Activated naive CD4-positive, alpha-beta T cell treated with anti-CD3 and anti-CD28 coated beads for 36 hours (primary cell): ENCODE measurements at regions of chr4 and their contacts with region 1.

Region 1: GRCh38 chr4:82957045-82957444 is 53.6 kb downstream of the LIN54 start:
- DNase-seq: peak; percentile 13
- H3K4me3 Mint-ChIP-seq: no peak overlapping the region
- H3K27ac Mint-ChIP-seq: no peak overlapping the region
- H3K4me1 Mint-ChIP-seq: peaks cover 11% of the 10 kb centered on the region
- H3K27me3 Mint-ChIP-seq: no peaks in the 10 kb centered on the region

Region 2: GRCh38 chr4:82989575-82990429 is 32.8 kb after region 1 on chr4:
- CTCF ChIA-PET with region 1: no interaction called
- intact Hi-C with region 1: loop called (anchors 5 kb)
- DNase-seq: no peak
- H3K4me3 Mint-ChIP-seq: no peak overlapping the region
- H3K27ac Mint-ChIP-seq: peak overlapping the region; percentile 50
- H3K4me1 Mint-ChIP-seq: peaks cover 20% of the 10 kb centered on the region
- H3K27me3 Mint-ChIP-seq: no peaks in the 10 kb centered on the region